ENCODE measurements at regions of chr19 and their contacts with region 1.

Region 1: DNA sequence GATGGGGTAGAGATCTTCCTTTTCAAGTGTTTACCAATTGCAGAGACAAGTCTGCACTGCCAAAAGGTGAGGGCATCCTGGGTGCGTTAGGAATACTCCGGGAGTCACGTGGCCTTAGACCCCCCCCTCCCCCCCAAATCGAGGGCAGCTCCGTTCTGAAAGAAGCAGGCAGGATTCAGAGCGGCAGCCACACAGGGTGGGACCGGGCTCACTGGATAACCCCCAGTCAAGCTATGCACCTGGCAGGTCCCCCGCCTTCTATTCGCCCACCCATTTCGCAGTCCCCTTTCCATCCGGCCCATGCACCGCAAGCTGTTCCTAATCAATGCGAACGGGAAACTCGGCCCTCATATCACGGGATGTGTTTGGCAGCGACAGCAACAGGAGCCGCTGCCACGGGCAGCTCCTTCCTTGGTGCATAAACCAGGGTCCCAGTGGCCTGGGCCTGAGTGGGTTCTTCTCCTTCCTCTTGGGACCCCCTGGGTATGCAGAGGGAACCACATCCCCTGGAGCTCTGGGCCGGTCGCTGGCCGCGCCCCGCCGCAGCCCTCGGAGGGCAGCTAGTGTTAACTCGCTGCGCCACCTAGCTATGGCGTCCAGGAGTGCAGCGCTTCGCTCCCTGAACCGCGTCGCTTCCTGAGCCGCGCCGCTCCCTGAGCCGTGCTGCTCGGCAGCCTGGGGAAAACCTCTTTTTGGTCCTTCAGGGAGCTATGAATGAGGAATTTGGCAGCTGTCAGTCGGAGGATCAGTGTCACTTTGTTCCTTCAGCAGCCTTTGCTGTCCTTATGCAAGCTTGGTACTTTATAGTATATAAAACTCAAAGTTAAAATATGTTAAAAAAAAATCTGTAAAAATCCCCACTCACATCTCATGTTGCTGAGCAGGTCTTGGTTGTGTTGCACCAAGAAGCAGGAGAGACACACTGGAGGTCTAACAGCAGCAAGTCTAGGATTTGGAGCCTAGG is 41.4 kb downstream of the LYL1 start:
- DNase-seq: peak; percentile 87
- H3K4me3 Mint-ChIP-seq: peak overlapping the region; percentile 71
- H3K27ac Mint-ChIP-seq: no peak overlapping the region
- H3K4me1 Mint-ChIP-seq: peaks cover 9% of the 10 kb centered on the region
- H3K27me3 Mint-ChIP-seq: peaks cover 4% of the 10 kb centered on the region

Region 2: DNA sequence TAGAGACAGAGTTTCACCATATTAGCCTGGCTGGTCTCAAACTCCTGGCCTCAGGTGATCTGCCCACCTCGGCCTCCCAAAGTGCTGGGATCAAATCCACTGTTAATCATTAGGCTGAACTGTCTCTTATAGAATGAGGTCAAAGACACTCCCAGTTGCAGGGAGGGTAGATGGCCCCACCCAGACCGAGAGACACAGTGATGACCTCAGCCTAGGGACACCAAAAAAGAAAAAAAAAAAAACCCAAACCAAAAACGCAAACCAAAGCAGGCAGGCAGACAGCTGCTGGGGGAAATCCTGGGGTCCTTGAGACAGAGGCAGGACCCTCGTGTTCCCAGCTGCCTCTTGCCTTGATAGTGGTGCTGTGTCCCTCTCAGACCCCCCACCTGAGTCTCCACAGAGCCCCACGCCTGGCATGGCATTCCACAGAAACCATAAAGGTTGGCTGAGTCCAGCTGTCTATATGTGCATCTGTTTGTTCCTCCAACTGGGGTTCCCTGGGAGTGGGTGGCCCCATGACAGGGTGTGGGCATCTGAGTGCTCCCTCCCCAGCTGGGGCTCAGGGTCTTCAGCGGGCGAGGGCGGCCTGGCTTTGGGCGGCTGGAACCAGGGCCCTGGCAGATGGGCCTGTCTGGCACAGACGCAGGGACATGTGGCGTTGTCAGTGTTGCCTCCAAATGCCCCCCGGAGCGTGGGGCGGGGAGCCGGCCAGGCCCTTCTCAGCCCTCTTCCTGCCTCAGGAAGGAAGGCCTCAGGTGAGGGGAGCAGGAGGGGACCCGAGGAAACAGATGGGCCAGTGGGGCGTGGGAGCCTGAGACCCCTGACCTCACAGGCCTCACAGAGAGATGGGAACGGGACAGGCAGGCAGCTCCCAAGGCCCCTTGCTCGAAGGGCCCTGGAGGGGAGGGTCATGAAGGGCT is 86.7 kb before region 1 on chr19:
- CTCF ChIA-PET with region 1: interaction called, 110 read pairs
- intact Hi-C with region 1: loop called (anchors 1 kb)
- DNase-seq: no peak
- H3K4me3 Mint-ChIP-seq: no peak overlapping the region
- H3K27ac Mint-ChIP-seq: no peak overlapping the region
- H3K4me1 Mint-ChIP-seq: peaks cover 8% of the 10 kb centered on the region
- H3K27me3 Mint-ChIP-seq: peaks cover 10% of the 10 kb centered on the region

Region 3: DNA sequence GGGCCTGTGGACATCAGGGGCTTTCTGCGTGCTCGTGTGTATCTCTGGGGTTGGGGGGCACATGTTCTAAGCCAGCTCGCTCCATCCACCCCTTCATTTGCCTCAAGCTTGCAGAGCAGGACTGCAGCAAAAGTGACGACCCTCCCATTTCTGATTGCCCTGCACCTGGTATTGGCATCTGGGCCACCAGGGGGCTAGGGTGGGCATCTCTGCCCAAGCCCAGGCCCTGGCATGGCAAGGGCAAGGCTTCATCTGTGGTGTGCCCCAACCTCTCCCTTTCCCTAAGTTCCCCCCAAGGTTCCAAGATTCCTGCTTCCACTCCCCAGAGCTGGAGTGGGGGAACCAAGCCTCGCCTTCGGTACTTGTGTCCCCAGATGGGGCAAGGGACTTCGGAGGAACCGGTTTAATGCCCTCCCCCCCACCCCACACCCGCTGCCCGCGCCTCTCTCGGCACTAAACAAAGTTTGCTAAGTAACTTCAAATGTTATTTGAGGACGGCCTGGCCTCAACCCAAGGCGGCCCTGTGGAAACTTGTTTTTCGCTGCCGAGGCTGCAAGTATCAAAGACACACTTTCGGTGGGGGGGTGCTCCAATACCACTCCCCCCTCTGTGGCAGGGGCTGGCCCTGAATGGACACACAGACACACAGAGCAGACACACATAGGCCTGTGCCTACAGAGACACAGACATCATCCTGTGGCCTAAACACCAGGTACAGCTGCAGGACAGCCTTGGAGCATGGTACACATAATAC is 53.8 kb before region 1 on chr19:
- CTCF ChIA-PET with region 1: interaction called, 10 read pairs
- intact Hi-C with region 1: no loop called
- DNase-seq: no peak
- H3K4me3 Mint-ChIP-seq: no peak overlapping the region
- H3K27ac Mint-ChIP-seq: no peak overlapping the region
- H3K4me1 Mint-ChIP-seq: peaks cover 9% of the 10 kb centered on the region
- H3K27me3 Mint-ChIP-seq: peaks cover 22% of the 10 kb centered on the region

Region 4: GRCh38 chr19:13022859-13023636 is 38.2 kb before region 1 on chr19:
- CTCF ChIA-PET with region 1: interaction called, 26 read pairs
- intact Hi-C with region 1: no loop called
- DNase-seq: peak; percentile 44
- H3K4me3 Mint-ChIP-seq: peak overlapping the region; percentile 70
- H3K27ac Mint-ChIP-seq: no peak overlapping the region
- H3K4me1 Mint-ChIP-seq: peaks cover 22% of the 10 kb centered on the region
- H3K27me3 Mint-ChIP-seq: peaks cover 7% of the 10 kb centered on the region

Region 5: GRCh38 chr19:13044231-13044836 is 16.9 kb before region 1 on chr19:
- CTCF ChIA-PET with region 1: interaction called, 17 read pairs
- intact Hi-C with region 1: no loop called
- DNase-seq: no peak
- H3K4me3 Mint-ChIP-seq: no peak overlapping the region
- H3K27ac Mint-ChIP-seq: no peak overlapping the region
- H3K4me1 Mint-ChIP-seq: peaks cover 4% of the 10 kb centered on the region
- H3K27me3 Mint-ChIP-seq: no peaks in the 10 kb centered on the region